Vagina (tissue), 2 donors: ENCODE measurements at regions of chr16 and their contacts with region 1.

Region 1: GRCh38 chr16:66924527-66925321 is 611 bp downstream of the RRAD start:
- DNase-seq: no peak
- H3K4me3 ChIP-seq: peak overlapping the region; percentile 56 to 61
- H3K27ac ChIP-seq: peak overlapping the region; percentile 81
- H3K4me1 ChIP-seq: peaks cover 5% of the 10 kb centered on the region
- H3K27me3 ChIP-seq: no peaks in the 10 kb centered on the region
- CTCF ChIP-seq: no peak
- POLR2A ChIP-seq: no peak

Region 2: DNA sequence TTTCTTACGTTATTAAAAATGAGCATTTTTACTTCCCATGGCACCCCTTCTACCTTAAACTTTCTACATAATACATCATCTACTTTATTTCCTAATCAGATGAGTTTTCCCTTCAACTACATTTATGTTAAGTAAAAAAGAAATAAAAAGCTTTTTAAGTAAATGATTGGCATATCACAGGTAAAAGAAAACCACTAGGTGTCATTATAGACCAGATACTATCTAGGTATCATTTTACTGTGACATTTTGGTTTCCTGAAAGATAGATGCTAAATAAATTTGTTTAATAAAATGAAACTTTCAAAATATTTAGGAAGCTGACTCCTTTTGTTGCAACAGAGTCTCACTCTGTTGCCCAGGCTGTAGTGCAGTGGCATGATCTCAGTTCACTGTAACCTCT is 362.3 kb before region 1 on chr16:
- intact Hi-C with region 1: no loop called
- DNase-seq: no peak
- H3K4me3 ChIP-seq: no peak overlapping the region
- H3K27ac ChIP-seq: no peak overlapping the region
- H3K4me1 ChIP-seq: no peaks in the 10 kb centered on the region
- H3K27me3 ChIP-seq: no peaks in the 10 kb centered on the region
- CTCF ChIP-seq: no peak
- POLR2A ChIP-seq: no peak

Region 3: DNA sequence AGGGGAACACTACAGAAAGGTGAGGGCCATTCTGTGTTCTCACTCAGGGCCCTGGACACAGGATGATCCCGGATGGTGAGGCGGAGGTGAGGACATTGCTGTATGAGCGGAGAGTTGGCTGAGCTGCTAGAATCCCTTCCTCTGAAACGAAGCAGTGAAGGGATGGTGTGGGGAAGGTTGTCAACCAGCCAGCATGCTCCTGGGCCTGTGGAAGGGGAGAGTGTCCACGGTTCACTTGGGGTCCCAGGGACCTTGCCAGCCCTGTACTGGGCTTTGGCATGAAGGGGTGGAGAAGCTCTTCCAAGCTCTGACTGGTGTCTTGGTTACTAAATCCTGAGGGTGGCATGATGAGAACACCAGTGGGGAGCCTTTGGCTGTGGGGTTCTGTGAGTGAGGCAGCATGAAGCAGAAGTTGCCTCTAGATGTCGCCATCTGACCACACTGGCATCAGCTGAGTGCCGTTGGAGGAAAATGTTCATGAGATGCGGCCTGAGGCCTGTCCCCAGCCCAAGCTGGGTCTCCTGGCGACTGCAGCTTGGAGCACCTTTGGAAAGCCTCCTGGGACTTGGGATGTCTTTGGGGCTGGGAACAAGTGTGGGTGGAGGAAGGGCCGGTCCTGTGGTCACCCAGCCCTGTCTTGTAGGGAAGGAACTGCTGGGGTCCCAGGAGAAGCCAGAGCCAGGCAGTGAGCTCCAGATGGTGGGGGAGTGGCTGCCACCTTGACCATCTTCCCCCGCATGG is 29.6 kb before region 1 on chr16:
- intact Hi-C with region 1: loop called (anchors 5 kb)
- DNase-seq: no peak
- H3K4me3 ChIP-seq: no peak overlapping the region
- H3K27ac ChIP-seq: no peak overlapping the region
- H3K4me1 ChIP-seq: peaks cover 19% of the 10 kb centered on the region
- H3K27me3 ChIP-seq: no peaks in the 10 kb centered on the region
- CTCF ChIP-seq: peak in 2 of 3 experiments; percentile 31 to 52
- POLR2A ChIP-seq: no peak

Region 4: GRCh38 chr16:66970775-66971725 is 46.3 kb after region 1 on chr16:
- intact Hi-C with region 1: no loop called
- DNase-seq: no peak
- H3K4me3 ChIP-seq: no peak overlapping the region
- H3K27ac ChIP-seq: no peak overlapping the region
- H3K4me1 ChIP-seq: no peaks in the 10 kb centered on the region
- H3K27me3 ChIP-seq: no peaks in the 10 kb centered on the region
- CTCF ChIP-seq: no peak
- POLR2A ChIP-seq: no peak

Region 5: GRCh38 chr16:67053767-67054334 is 129.1 kb after region 1 on chr16:
- intact Hi-C with region 1: no loop called
- DNase-seq: no peak
- H3K4me3 ChIP-seq: no peak overlapping the region
- H3K27ac ChIP-seq: no peak overlapping the region
- H3K4me1 ChIP-seq: peaks cover 10% of the 10 kb centered on the region
- H3K27me3 ChIP-seq: no peaks in the 10 kb centered on the region
- CTCF ChIP-seq: no peak
- POLR2A ChIP-seq: no peak

Region 6: DNA sequence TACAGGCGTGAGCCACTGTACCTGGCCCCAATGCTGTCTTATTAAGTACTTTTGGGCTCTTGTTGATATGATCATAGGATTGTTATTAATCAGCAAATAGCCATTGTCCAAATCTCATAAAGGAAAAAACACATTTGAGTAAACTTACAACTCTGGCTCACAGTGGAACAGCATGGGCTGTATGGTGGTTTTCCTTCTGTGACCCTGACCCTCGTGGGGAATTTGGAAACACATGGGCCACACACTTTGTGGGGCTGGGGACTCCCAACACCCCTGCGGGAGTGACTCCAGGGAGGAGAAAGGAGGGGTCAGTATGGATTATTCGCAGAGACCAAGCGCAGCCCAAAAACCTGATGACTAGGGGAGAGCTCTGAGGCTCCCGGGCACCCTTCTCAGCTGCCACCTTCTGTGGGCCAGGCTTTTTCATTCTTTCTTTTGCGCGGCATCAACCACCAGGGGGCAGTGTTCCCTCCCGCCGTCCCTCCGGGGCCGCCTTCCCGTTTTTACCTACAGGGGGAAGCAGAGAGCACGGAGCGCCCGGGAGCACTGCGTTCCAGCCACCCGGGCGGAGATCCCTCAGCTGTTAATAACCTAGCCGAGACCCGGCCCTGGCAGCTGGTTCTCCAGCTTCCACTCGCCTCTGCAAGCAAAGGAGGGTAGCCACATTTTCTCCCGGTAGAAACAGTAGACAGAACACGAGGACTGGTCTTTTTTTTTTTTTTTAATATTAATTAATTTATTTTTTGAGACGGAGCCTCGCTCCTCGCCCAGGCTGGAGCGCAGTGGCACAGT is 891.7 kb after region 1 on chr16:
- intact Hi-C with region 1: no loop called
- DNase-seq: no peak
- H3K4me3 ChIP-seq: no peak overlapping the region
- H3K27ac ChIP-seq: no peak overlapping the region
- H3K4me1 ChIP-seq: peaks cover 5% of the 10 kb centered on the region
- H3K27me3 ChIP-seq: no peaks in the 10 kb centered on the region
- CTCF ChIP-seq: peak; percentile 99
- POLR2A ChIP-seq: no peak